ENCODE measurements at regions of chr10 and their contacts with region 1.

Region 1: DNA sequence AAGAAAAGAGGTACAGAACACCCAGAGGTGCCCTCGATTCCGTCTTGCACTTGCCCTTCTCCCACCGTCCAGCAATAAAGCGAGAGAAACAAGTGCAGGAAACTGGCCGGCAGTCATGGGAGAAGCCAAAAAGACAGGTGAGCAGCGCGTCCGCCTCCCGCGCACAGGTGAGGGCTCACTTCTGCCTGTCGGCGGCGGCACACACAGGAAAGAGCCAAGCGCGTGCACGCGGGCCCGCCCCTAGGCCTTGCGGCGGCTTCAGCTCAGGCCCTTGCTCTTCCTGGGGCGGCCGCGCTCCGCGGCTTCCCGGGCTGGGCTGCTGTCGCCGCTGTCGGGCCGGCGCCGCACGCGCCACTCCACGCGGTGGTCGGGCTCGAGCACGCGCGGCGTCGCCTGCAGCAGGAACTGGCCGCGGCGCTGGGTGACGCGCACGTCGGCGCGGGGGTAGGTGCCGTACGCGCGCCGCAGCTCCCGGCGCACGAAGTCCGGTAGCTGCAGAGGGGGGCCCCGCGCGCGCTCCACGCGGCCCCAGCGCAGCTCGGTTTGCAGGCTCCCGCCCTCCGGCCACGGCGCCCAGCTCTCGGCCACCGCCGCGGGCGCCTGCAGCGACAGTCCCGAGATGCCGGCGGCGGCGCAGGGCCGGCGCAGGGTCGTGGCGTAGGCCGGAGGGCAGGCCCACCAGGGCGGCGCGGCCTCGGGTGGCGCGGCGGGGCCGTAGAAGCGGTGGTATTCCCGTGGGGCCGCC is 977 bp downstream of the C10orf95 start:
- DNase-seq: peak; percentile 90
- H3K4me3 Mint-ChIP-seq: peak overlapping the region; percentile 94
- H3K27ac Mint-ChIP-seq: peak overlapping the region; percentile 94
- H3K4me1 Mint-ChIP-seq: peaks cover 35% of the 10 kb centered on the region
- H3K27me3 Mint-ChIP-seq: no peaks in the 10 kb centered on the region

Region 2: DNA sequence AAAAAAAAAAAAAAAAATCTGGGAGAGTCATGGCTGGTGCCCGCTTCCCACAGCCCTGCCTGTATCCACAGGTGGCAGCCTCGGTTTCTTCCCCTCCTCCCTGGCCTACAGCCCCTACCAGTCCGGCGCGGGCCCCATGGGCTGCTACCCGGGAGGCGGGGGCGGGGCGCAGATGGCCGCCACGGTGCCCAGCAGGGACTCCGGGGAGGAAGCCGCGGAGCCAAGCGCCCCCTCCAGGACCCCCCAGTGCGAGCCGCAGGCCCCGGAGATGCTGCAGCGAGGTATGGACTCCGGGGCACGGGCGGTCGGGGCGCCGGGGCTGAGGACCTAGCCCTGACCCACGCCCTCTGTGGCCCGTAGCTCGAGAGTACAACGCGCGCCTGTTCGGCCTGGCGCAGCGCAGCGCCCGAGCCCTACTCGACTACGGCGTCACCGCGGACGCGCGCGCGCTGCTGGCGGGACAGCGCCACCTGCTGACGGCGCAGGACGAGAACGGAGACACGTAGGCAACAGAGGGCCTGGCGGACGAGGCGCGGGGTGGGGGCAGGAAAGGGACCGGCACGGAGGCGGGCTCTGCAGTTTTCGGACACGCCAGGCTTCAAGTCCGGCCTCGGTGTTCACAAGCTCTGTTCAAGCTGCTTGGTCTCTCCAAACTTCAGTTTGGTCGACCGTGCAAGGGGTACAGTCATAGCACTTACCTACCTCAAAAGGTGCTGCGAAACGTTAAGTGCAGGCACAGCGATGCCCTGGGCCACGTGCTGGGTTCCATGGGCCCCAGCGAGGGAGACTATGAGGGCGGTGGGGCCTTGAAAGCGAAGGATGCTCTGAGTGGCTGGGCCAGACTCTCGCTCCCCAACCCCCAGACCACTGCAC is 50.9 kb before region 1 on chr10:
- CTCF ChIA-PET with region 1: interaction called, 20 read pairs
- POLR2A ChIA-PET with region 1: interaction called, 36 read pairs
- intact Hi-C with region 1: loop called (anchors 1 kb)
- DNase-seq: peak; percentile 92
- H3K4me3 Mint-ChIP-seq: peak overlapping the region; percentile 68
- H3K27ac Mint-ChIP-seq: peak overlapping the region; percentile 74
- H3K4me1 Mint-ChIP-seq: peaks cover 40% of the 10 kb centered on the region
- H3K27me3 Mint-ChIP-seq: no peaks in the 10 kb centered on the region

Region 3: GRCh38 chr10:102420810-102421644 is 29.3 kb before region 1 on chr10 and contains the start of gene FBXL15:
- CTCF ChIA-PET with region 1: interaction called, 13 read pairs
- POLR2A ChIA-PET with region 1: interaction called, 14 read pairs
- intact Hi-C with region 1: loop called (anchors 1 kb)
- DNase-seq: peak; percentile 98
- H3K4me3 Mint-ChIP-seq: peak within 1 kb of the TSS; percentile 94
- H3K27ac Mint-ChIP-seq: peak within 1 kb of the TSS; percentile 92
- H3K4me1 Mint-ChIP-seq: peaks cover 35% of the 10 kb centered on the region
- H3K27me3 Mint-ChIP-seq: peaks cover 20% of the 10 kb centered on the region
- total RNA-seq, gene FBXL15: 10.8 to 11.4 TPM

Region 4: GRCh38 chr10:102432162-102432950 is 18.0 kb before region 1 on chr10 and contains the start of gene CUEDC2:
- CTCF ChIA-PET with region 1: interaction called, 10 read pairs
- POLR2A ChIA-PET with region 1: interaction called, 36 read pairs
- intact Hi-C with region 1: loop called (anchors 1 kb)
- DNase-seq: peak; percentile 99
- H3K4me3 Mint-ChIP-seq: peak within 1 kb of the TSS; percentile 84
- H3K27ac Mint-ChIP-seq: peak within 1 kb of the TSS; percentile 88
- H3K4me1 Mint-ChIP-seq: peaks cover 42% of the 10 kb centered on the region
- H3K27me3 Mint-ChIP-seq: no peaks in the 10 kb centered on the region
- total RNA-seq, gene CUEDC2: 68.6 to 68.9 TPM

Region 5: DNA sequence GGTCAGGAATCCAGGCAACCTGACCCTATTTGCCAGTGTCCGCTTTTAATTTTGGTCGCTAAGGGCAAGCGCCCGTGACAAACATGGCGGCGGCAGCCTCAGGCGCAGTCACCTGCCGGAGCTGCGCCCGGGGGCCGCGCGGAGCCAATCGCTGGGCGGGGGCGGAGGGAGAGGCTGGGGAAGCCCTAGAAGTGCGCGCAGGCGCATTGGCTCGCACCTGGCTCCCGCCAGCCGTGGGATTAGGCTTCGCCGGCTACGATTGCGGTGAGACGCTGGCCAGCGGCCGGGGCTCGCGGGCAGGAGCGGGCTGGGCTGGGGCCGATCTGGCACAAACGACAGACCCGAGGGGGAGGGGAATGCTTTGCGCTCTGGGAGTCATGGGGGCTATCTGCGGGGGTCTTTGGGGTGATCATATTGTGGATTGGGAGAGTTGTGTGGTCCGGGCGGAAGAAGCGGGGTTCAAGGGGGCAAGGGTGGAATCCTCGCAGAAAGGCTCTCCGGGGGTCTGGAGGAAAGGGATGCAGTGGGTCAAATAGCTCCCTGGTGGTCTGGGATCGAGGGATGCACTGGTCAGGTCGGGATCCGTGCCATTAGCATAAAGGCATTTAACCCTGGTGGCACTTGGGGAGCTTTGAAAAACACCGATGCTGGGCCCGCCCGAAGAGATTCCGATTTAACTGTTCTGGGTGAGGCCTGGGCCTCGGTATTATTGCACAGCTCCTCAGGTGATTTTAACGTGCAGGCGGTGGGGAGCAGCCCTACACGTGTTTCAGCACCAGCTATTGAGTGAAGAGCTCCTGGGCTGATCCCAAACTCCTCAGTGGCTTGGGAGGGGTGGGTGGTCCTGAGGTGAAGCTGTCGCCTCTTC is 11.1 kb after region 1 on chr10:
- CTCF ChIA-PET with region 1: interaction called, 22 read pairs
- POLR2A ChIA-PET with region 1: interaction called, 33 read pairs
- intact Hi-C with region 1: no loop called
- DNase-seq: peak; percentile 95
- H3K4me3 Mint-ChIP-seq: peak overlapping the region; percentile 82
- H3K27ac Mint-ChIP-seq: peak overlapping the region; percentile 47
- H3K4me1 Mint-ChIP-seq: peaks cover 23% of the 10 kb centered on the region
- H3K27me3 Mint-ChIP-seq: no peaks in the 10 kb centered on the region

Region 6: DNA sequence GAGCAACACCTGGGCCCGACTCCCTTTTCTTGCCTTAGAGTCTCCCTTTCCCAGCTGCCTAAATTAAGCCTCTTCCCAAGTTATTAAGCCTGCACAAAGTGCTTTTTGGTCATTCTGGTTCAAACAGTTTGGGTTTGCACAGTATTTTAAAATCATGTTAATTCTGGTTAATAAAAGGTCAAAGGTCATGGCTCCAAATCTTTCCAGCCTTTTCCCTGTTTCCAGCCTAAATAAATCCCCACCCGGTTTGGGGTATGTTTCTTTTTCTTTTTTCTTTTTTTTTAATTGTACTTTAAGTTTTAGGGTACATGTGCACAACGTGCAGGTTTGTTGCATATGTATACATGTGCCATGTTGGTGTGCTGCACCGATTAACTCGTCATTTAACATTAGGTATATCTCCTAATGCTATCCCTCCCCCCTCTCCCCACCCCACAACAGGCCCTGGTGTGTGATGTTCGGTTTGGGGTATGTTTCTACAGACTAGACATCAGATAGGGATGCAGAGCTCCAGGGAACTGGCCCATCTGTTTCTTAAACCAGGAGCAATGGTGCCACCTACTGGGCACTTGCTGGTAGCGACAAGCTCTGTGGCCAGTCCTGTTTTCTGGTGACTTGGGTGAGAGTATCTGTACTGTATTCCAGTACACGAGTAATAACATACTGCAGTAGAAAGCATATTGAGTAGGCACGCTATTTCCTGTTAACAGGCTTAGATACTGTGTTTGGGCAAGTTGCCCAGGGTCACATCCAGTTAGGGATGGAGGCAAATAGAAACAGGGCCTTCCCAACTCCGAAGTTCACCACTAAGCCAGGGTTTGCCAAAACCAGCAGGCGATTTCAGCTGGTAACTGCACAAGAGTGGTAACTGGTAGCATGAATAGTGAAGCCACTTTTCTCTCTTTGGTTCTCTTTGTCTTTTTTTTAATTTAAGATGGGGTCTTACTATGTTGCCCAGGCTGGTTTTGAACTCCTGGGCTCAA is 133.4 kb after region 1 on chr10:
- CTCF ChIA-PET with region 1: interaction called, 10 read pairs
- POLR2A ChIA-PET with region 1: no interaction called
- intact Hi-C with region 1: no loop called
- DNase-seq: peak; percentile 90
- H3K4me3 Mint-ChIP-seq: no peak overlapping the region
- H3K27ac Mint-ChIP-seq: no peak overlapping the region
- H3K4me1 Mint-ChIP-seq: peaks cover 13% of the 10 kb centered on the region
- H3K27me3 Mint-ChIP-seq: no peaks in the 10 kb centered on the region

Region 7: DNA sequence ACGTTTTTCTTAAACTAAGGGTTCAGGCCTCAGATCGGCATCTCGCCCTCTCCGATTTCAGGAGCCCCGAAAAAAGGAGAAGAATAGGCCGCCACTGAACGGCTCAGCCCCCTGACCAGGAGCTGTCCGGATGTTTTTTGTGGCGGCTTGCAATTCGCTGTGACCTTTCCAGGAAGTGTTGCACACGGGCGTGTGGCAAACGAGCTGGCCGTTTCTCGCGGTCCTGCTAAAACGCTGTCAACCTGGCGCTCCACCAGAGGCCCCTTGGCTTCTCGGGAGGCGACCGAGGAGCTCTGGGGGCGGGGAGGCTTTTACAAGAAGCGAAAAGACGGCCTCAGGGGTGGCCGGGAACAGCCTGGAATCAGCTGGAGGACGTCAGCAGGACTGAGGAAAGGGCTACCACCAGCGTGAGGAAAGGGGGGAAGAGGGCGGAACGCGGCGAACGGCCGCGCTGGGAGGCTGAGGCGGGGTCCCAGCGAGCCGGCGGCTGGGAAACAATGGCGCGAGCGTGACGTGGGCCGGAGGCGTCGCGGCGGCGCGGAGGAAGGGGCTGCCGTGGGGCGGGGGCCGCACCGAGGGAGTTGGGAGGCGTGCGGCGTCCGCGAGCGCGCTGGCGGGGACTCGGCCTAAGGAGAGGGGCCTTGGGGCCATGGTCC is 742.2 kb after region 1 on chr10:
- CTCF ChIA-PET with region 1: no interaction called
- POLR2A ChIA-PET with region 1: no interaction called
- intact Hi-C with region 1: loop called (anchors 10 kb)
- DNase-seq: peak; percentile 81
- H3K4me3 Mint-ChIP-seq: peak overlapping the region; percentile 92
- H3K27ac Mint-ChIP-seq: peak overlapping the region; percentile 92
- H3K4me1 Mint-ChIP-seq: peaks cover 43% of the 10 kb centered on the region
- H3K27me3 Mint-ChIP-seq: no peaks in the 10 kb centered on the region

Measured in activated CD4-positive, alpha-beta memory T cell treated with anti-CD3 and anti-CD28 coated beads for 36 hours (primary cell).